IMR-90 (cell line): ENCODE measurements at regions of chr6 and their contacts with region 1.

Region 1: GRCh38 chr6:154403788-154404187 is 47.2 kb upstream of the IPCEF1 start:
- DNase-seq: peak; percentile 82
- ATAC-seq: peak; percentile 65
- H3K4me3 ChIP-seq: no peak overlapping the region
- H3K27ac ChIP-seq: peak overlapping the region; percentile 88
- H3K4me1 ChIP-seq: peaks cover 22% of the 10 kb centered on the region
- H3K27me3 ChIP-seq: no peaks in the 10 kb centered on the region
- CTCF ChIP-seq: no peak
- POLR2A ChIP-seq: no peak
- RAD21 ChIP-seq: no peak

Region 2: DNA sequence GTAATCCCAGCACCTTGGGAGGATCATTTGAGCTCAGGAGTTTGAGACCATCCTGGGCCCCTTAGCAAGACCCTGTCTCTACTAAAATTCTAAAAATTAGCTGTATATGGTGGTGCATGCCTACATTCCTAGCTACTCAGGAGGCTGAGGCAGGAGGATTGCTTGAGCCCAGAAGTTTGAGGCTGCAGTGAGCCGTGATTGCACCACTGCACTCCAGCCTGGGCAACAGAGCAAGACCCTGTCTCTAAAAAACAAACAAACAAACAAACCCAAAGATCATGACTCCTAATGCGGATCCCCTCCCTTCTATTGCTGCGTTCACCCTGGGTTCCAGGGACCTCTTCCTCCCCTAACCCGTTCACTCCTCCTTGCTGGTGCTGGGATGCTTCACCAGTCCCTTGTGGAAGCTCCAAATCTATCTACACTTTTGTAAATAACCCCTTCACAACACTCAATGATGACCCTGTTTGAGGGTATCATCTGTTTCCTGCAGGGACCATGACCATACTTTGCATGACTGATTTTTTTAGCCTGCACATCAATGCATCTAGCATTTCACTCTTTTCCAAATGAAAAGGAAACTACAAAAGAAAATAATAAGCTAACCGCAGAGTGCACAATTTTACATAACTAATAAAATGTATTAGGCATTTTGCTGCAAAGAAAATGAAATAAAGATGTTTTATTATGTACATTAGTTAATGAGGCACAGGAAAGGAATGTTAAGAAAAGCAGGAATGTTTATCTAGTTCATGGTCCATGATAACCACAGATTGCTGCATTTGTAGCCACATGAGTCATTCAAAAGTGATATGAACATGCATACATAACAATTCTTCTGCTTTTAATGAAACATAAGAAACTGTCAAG is 16.7 kb before region 1 on chr6:
- CTCF ChIA-PET with region 1: no interaction called
- POLR2A ChIA-PET with region 1: no interaction called
- dilution Hi-C with region 1: no loop called
- in situ Hi-C with region 1: no loop called
- intact Hi-C with region 1: loop called (anchors 2 kb)
- DNase-seq: peak; percentile 97
- ATAC-seq: peak; percentile 84
- H3K4me3 ChIP-seq: no peak overlapping the region
- H3K27ac ChIP-seq: peak overlapping the region; percentile 74; the same call in 1 of the 2 replicates
- H3K4me1 ChIP-seq: peaks cover 8% of the 10 kb centered on the region
- H3K27me3 ChIP-seq: no peaks in the 10 kb centered on the region
- CTCF ChIP-seq: no peak
- POLR2A ChIP-seq: no peak
- RAD21 ChIP-seq: no peak